Activated CD4-positive, alpha-beta T cell treated with anti-CD3 and anti-CD28 coated beads, Interleukin-2, amount 10 ng/mL, durations not matched to agents 24 days and 14 days (primary cell): ENCODE measurements at regions of chr22 and their contacts with region 1.

Region 1: GRCh38 chr22:50582562-50583293 is at the start of gene CHKB:
- DNase-seq: peak; percentile 100
- H3K4me3 Mint-ChIP-seq: peak within 1 kb of the TSS; percentile 93
- H3K27ac Mint-ChIP-seq: peak within 1 kb of the TSS; percentile 93
- H3K4me1 Mint-ChIP-seq: peaks cover 14% of the 10 kb centered on the region
- H3K27me3 Mint-ChIP-seq: no peaks in the 10 kb centered on the region
- total RNA-seq, gene CHKB: 83.2 and 84.7 TPM in 2 replicates

Region 2: GRCh38 chr22:50525390-50526068 is 57.2 kb before region 1 on chr22 and contains the start of gene SCO2:
- intact Hi-C with region 1: loop called (anchors 1 kb)
- DNase-seq: peak; percentile 99
- H3K4me3 Mint-ChIP-seq: peak within 1 kb of the TSS; percentile 90
- H3K27ac Mint-ChIP-seq: peak within 1 kb of the TSS; percentile 88
- H3K4me1 Mint-ChIP-seq: peaks cover 32% of the 10 kb centered on the region
- H3K27me3 Mint-ChIP-seq: no peaks in the 10 kb centered on the region
- total RNA-seq, gene SCO2: 5.3 and 11.2 TPM in 2 replicates

Region 3: DNA sequence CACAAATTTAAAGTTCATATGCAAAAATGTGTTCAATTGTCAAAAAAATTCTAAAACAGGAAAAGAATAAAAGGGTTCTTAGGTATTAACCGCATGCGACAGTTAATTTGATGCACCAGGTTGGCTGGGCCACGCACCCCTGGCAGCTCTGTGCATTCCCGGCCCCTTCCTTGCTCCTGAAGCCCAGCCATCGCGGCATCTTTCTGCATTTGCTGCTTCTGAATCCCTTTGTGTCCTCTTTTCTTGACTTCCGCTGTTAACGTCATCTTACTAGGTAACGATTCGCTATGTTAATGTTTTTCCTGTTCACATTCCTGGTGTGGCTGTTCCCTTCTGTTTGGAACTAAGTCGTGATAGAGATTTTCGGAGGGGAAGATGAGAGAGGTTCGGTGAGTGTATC is 45.0 kb before region 1 on chr22:
- intact Hi-C with region 1: loop called (anchors 2 kb)
- DNase-seq: no peak
- H3K4me3 Mint-ChIP-seq: peak overlapping the region; percentile 55
- H3K27ac Mint-ChIP-seq: peak overlapping the region; percentile 99
- H3K4me1 Mint-ChIP-seq: peaks cover 75% of the 10 kb centered on the region
- H3K27me3 Mint-ChIP-seq: no peaks in the 10 kb centered on the region

Region 4: DNA sequence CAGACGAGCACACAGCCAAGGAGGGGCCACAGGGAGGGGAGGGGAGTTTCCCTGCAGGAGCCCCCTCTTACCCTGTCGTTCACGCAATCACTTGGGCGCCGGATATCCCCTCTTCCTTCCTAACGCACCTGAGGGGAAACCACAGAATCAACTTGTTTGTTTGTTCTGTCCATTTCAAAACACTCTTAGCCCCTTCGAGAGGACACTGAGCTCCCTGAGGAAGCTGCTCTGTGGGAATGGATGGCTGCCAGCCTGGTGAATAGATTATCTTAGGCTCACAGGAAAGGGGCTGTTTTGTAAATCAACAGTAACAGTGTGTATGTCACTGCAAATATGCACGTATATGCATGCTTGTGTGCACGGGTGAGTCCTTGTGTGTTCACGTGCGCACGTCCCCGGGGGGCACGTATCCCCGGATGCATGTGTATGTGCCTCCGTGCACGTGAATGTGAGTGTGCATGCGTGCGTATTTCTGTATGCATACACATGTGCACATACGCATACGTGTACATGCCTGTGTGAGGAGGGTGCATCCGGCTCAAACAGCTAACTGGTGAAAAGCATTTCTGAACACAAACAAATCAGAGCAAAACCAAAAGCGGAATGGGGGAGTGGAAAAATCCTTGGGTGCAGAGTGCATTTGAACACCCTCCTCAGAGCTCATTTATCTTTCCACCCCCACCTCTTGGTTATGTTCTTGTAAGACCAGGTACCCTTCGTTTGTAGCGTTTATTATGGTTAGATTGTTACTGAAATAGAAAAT is 38.0 kb after region 1 on chr22:
- intact Hi-C with region 1: loop called (anchors 1 kb)
- DNase-seq: peak; percentile 92
- H3K4me3 Mint-ChIP-seq: peak overlapping the region; percentile 85
- H3K27ac Mint-ChIP-seq: peak overlapping the region; percentile 99
- H3K4me1 Mint-ChIP-seq: peaks cover 35% of the 10 kb centered on the region
- H3K27me3 Mint-ChIP-seq: no peaks in the 10 kb centered on the region